ENCODE measurements at regions of chr2 and their contacts with region 1.

Region 1: DNA sequence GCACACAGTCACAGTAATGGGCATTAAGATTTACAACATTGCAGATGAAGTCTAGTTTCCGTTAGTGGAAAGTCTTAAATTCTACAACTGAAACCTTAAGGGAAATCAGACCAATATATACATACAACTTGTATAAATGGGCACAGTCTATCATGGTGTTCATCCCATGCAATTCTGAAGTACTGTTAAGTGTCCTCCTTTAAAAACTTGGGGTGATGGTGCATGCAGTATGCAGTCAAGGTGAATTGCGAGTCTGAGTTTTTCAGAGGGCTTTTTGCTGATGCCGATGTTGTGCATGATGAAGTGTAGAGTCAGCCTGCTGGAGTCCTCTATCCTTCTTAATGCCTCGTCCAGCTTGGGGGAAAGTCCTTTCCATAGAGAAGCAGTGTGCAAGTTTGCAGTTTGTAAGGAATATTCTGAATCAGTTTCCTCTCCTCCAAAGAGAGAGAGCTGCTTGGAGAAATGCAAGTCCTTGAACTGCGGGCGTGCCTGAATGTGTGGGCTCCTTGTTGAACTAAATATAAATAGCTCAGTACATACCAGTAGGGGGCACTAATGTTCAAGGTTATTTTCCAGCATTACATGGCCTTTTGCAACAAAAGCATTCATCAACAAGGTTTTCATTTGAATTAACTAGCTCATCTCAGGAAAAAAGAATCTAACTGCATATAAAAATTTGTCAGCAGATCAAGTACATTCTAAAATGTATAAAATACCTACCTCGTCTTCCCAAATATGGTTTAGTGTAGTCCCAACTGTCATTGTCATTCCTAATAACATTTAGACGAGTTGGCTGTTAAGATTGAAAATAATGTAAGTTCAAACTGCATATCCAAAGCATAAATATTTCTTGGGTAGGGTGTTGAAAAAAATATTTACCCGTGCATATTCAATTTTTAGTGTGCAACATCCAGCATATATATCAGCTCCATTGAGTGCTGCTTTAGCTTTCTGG is 21.3 kb downstream of the HNRNPLL start:
- DNase-seq: peak in 9 of 14 experiments; percentile 9 to 87 (median 39)
- ATAC-seq: peak; percentile 87
- H3K4me3 ChIP-seq: no peak overlapping the region
- H3K4me3 Mint-ChIP-seq: no peak overlapping the region
- H3K27ac ChIP-seq: no peak overlapping the region
- H3K27ac Mint-ChIP-seq: peak overlapping the region; percentile 1
- H3K4me1 ChIP-seq: peaks cover 7% of the 10 kb centered on the region
- H3K4me1 Mint-ChIP-seq: peaks cover 22% of the 10 kb centered on the region
- H3K27me3 ChIP-seq: no peaks in the 10 kb centered on the region
- H3K27me3 Mint-ChIP-seq: no peaks in the 10 kb centered on the region
- CTCF ChIP-seq: peak; percentile 79

Region 2: DNA sequence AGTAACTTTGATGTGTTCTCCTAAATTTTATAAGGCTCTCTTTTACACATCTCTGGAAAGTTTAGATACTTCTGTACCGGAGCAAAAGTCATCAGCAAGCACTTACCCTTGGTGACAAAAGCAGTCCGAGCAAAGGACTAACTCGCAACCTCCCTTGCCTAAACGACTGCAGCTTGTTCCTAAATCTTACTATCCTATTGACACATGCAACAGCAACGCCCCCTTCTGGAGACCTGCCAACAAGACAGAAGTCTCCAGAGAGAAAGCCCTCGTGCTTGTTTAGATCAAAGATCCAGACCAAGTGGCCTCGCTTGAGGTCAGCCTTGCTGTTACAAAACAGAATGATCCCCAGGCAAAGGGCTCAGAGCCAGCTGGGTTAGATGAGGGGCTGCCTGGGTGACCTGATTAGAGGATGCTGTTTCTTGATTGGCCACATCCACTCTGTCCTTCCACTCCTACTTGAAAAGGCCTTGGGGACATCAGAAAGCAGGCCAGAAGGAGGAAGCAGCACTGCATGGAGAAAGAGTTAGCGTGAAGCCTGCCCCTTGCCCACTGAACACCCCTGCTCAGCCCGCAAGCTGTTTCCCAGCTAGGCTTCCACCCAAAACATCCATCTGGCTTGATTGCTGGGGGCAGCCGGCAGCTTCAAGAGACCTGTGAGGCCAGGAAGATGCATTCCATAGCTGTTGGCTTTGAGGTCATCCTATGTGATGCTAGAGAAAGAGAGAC is 73.0 kb before region 1 on chr2:
- CTCF ChIA-PET with region 1: no interaction called
- POLR2A ChIA-PET with region 1: no interaction called
- intact Hi-C with region 1: no loop called
- DNase-seq: peak; percentile 67 to 87 (median 76)
- ATAC-seq: peak; percentile 81
- H3K4me3 ChIP-seq: no peak overlapping the region
- H3K4me3 Mint-ChIP-seq: no peak overlapping the region
- H3K27ac ChIP-seq: no peak overlapping the region
- H3K27ac Mint-ChIP-seq: no peak overlapping the region
- H3K4me1 ChIP-seq: peaks cover 7% of the 10 kb centered on the region
- H3K4me1 Mint-ChIP-seq: peaks cover 6% of the 10 kb centered on the region
- H3K27me3 ChIP-seq: no peaks in the 10 kb centered on the region
- H3K27me3 Mint-ChIP-seq: peaks cover 6% of the 10 kb centered on the region
- CTCF ChIP-seq: peak; percentile 76

Region 3: GRCh38 chr2:38535744-38536506 is 45.5 kb before region 1 on chr2:
- CTCF ChIA-PET with region 1: interaction called, 5 read pairs
- POLR2A ChIA-PET with region 1: no interaction called
- intact Hi-C with region 1: loop called in 1 of 2 experiments (anchors 5 kb)
- DNase-seq: peak; percentile 55 to 90 (median 76)
- ATAC-seq: peak; percentile 96
- H3K4me3 ChIP-seq: peak overlapping the region; percentile 44
- H3K4me3 Mint-ChIP-seq: no peak overlapping the region
- H3K27ac ChIP-seq: no peak overlapping the region
- H3K27ac Mint-ChIP-seq: no peak overlapping the region
- H3K4me1 ChIP-seq: peaks cover 14% of the 10 kb centered on the region
- H3K4me1 Mint-ChIP-seq: no peaks in the 10 kb centered on the region
- H3K27me3 ChIP-seq: no peaks in the 10 kb centered on the region
- H3K27me3 Mint-ChIP-seq: peaks cover 7% of the 10 kb centered on the region
- CTCF ChIP-seq: peak; percentile 93

Region 4: GRCh38 chr2:38682008-38682575 is 100.6 kb after region 1 on chr2:
- CTCF ChIA-PET with region 1: interaction called, 14 read pairs
- POLR2A ChIA-PET with region 1: interaction called, 17 read pairs
- intact Hi-C with region 1: no loop called
- DNase-seq: peak in 4 of 14 experiments; percentile 28 to 82 (median 76)
- ATAC-seq: peak; percentile 88
- H3K4me3 ChIP-seq: peak overlapping the region; percentile 31
- H3K4me3 Mint-ChIP-seq: peak overlapping the region; percentile 49
- H3K27ac ChIP-seq: peak overlapping the region; percentile 71 to 78
- H3K27ac Mint-ChIP-seq: peak overlapping the region; percentile 86
- H3K4me1 ChIP-seq: peaks cover 55% of the 10 kb centered on the region
- H3K4me1 Mint-ChIP-seq: peaks cover 50% of the 10 kb centered on the region
- H3K27me3 ChIP-seq: no peaks in the 10 kb centered on the region
- H3K27me3 Mint-ChIP-seq: no peaks in the 10 kb centered on the region
- CTCF ChIP-seq: peak; percentile 23

Region 5: DNA sequence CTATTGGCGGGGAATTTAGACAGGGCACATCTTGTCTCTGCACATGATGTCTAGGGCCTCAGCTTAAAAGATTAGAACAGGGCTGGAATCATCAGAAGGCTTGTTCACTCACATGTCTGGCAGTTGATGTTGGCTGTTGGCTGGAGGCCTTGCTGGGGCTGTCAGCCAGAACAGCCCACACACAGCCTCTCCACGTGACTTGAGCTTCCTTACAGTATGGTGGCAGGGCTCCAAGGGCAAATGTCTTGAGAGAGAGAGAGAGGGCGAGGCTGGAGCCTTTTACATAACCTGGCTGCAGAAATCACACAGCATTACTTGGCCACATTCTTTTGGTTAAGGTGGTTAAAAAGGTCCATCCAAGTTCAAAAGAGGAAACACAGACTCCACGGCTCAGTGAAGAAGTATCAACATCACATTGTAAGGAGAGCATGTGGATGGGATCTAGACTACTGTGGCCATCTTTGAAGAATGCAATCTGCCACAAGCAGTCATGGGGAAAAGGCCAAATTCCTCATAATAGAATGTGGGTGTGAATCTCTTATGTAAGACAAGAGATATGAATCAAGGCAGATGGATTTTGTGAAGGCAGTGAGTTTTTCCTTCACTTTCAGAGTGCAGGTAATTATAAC is 139.3 kb after region 1 on chr2:
- CTCF ChIA-PET with region 1: interaction called, 10 read pairs
- POLR2A ChIA-PET with region 1: interaction called, 10 read pairs
- intact Hi-C with region 1: loop called in 1 of 2 experiments (anchors 1 kb)
- DNase-seq: no peak
- ATAC-seq: no peak
- H3K4me3 ChIP-seq: no peak overlapping the region
- H3K4me3 Mint-ChIP-seq: no peak overlapping the region
- H3K27ac ChIP-seq: peak overlapping the region in 1 of 2 donors; percentile 7
- H3K27ac Mint-ChIP-seq: peak overlapping the region; percentile 25
- H3K4me1 ChIP-seq: peaks cover 37% of the 10 kb centered on the region
- H3K4me1 Mint-ChIP-seq: peaks cover 53% of the 10 kb centered on the region
- H3K27me3 ChIP-seq: no peaks in the 10 kb centered on the region
- H3K27me3 Mint-ChIP-seq: no peaks in the 10 kb centered on the region
- CTCF ChIP-seq: no peak

Region 6: DNA sequence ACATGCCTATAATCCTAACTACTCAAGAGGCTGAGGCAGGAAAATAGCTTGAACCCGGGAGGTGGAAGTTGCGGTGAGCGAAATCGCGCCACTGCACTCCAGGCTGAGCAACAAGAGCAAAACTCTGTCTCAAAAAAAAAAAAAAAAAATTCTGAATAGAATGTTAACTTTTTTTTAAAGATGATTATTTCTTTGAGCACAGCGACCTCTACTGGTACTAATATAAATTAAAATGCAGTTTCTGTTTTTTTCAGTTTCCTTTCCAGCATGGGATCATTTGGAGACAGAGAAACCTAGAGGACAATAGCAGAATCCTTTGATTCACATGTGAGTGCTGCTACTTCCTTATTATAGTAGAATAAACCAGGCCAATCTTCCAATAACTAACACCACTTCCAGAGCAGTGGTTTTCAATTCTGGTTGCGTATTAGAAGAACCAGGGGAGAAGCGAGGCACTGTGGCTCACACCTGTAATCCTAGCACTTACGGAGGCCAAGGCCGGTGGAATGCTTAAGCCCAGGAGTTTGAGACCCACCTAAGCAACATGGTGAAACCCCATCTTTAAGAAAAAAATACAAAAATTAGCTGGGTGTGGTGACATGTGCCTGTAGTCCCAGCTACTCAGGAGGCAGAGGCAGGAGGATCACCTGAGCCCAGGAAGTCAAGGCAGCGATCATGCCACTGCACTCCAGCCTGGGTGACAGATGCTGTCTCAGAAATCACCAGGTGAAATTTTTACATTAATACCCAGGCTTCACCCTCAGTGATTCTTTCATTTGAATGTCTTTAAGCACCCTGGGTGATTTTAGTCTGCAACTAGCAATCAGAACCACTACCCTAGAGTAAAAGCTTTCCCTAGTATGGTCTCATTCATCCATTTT is 159.6 kb after region 1 on chr2:
- CTCF ChIA-PET with region 1: interaction called, 12 read pairs
- POLR2A ChIA-PET with region 1: interaction called, 42 read pairs
- intact Hi-C with region 1: loop called (anchors 1 to 2 kb)
- DNase-seq: peak in 6 of 14 experiments; percentile 25 to 76 (median 51)
- ATAC-seq: peak; percentile 33
- H3K4me3 ChIP-seq: no peak overlapping the region
- H3K4me3 Mint-ChIP-seq: peak overlapping the region; percentile 1
- H3K27ac ChIP-seq: no peak overlapping the region
- H3K27ac Mint-ChIP-seq: peak overlapping the region; percentile 43
- H3K4me1 ChIP-seq: peaks cover 17% of the 10 kb centered on the region
- H3K4me1 Mint-ChIP-seq: peaks cover 54% of the 10 kb centered on the region
- H3K27me3 ChIP-seq: no peaks in the 10 kb centered on the region
- H3K27me3 Mint-ChIP-seq: no peaks in the 10 kb centered on the region
- CTCF ChIP-seq: peak; percentile 78

Region 7: DNA sequence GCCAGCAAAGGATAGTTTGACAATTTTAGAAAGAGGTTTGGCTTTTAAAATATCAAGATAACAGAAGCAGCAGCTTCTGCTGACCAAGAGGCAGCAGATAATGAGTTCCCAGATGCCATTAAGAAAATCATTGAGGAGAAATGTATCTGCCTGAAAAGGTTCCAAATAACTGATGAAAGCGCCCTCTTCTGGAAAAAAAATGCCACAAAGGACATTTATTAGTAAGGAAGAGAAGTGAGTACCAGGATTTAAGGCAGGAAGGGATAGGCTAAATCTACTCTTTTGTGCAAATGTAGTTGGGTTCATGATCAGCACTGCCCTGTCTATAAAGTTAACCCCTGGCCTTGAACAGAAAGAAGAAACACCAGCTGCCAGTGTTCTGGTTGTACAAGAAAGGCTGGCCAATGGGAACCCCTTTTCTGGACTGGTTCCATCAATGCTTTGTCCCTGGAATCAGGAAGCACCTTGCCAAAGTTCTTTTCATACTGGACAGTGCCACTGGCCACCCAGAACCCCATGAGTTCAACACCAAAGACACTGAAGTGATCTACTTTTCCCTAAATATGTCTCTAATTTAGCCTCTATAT is 253.6 kb after region 1 on chr2:
- CTCF ChIA-PET with region 1: no interaction called
- POLR2A ChIA-PET with region 1: no interaction called
- intact Hi-C with region 1: loop called (anchors 5 to 10 kb)
- DNase-seq: peak in 3 of 14 experiments; percentile 26 to 40 (median 35)
- ATAC-seq: no peak
- H3K4me3 ChIP-seq: no peak overlapping the region
- H3K4me3 Mint-ChIP-seq: no peak overlapping the region
- H3K27ac ChIP-seq: no peak overlapping the region
- H3K27ac Mint-ChIP-seq: no peak overlapping the region
- H3K4me1 ChIP-seq: no peaks in the 10 kb centered on the region
- H3K4me1 Mint-ChIP-seq: no peaks in the 10 kb centered on the region
- H3K27me3 ChIP-seq: no peaks in the 10 kb centered on the region
- H3K27me3 Mint-ChIP-seq: no peaks in the 10 kb centered on the region
- CTCF ChIP-seq: peak; percentile 46

Region 8: DNA sequence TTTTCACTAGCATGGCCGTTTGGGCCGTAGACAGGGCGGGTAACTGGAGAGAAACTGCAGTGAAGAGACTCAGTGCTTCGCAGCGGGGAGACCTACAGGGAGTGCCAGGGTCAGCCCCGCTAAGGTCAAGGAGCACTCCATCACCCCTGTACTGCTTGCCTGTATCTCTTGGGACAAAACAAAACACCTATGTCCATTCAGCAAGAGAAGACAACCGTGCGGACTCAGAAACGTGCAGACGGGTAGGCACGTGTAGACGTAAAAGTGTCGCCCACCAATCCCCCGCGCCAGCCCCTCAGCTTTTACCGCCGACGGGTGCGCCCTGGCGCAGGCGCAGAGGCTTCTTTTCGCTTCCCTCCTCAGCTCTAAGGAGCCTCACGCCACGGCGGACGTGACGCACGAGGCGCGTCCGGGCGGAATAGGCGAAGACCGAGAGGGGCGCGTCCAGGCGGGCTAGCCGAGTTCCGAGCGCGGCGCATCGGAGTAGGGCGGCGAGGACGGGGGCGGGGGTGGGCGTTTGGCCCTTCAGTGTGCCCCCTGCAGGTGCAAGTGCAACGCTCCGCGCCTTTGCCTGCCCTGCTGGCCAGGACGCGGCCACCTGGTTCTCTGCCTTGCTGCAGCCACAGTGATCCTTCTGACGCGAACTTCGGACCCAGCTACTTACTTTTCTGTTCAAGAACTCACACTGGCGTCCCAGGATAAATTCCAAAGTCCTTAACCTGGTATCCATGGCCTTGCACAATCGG is 542.7 kb after region 1 on chr2:
- CTCF ChIA-PET with region 1: no interaction called
- POLR2A ChIA-PET with region 1: no interaction called
- intact Hi-C with region 1: no loop called
- DNase-seq: peak; percentile 89 to 98 (median 94)
- ATAC-seq: peak; percentile 74
- H3K4me3 ChIP-seq: peak overlapping the region; percentile 83
- H3K4me3 Mint-ChIP-seq: peak overlapping the region; percentile 96
- H3K27ac ChIP-seq: peak overlapping the region; percentile 88 to 89
- H3K27ac Mint-ChIP-seq: peak overlapping the region; percentile 99
- H3K4me1 ChIP-seq: peaks cover 50% of the 10 kb centered on the region
- H3K4me1 Mint-ChIP-seq: peaks cover 63% of the 10 kb centered on the region
- H3K27me3 ChIP-seq: no peaks in the 10 kb centered on the region
- H3K27me3 Mint-ChIP-seq: no peaks in the 10 kb centered on the region
- CTCF ChIP-seq: peak; percentile 67

Measured in CD4-positive, alpha-beta T cell (primary cell).